ENCODE measurements at regions of chr10 and their contacts with region 1.

Region 1: DNA sequence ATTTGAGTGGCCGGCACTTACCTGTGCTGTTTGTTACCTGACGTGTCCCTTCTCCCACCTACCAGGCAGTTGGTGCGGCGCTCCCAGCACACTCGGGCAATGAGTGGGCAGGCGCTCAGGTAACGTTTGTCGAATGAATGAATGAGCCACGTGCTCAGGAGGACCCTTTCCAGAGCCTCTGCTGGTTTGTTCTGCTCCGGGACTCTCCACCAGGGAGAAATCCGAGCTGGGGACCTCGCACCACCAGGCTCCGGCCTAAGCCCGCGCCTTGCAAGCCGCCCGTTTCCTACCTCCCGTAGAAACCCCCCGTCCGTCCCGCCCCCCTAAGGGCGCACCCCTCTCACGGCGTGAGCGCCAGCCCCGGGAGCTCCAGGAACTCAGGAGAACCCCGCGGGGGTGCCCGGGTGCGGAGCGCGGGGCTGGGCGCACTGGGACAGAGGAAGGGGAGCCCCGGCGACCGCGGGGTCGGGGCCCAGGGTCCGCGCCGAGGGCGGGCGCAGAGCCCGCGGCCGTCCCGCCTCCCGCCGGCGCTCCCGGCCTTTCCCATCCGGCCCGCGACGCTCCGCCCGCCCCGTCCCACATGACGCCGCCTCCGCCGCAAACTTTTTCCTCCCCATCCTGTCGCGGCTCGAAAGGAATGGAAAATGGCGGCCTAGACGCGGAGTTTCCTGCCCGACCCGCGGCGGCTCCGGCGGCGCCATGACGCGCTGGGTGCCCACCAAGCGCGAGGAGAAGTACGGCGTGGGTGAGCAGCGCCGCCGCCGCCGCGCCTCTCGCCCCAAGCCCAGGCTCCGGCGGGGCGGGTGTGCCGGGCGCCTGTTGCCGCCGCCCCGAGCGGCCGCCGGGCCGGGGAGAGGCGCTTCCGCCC is at the start of gene DOCK1:
- DNase-seq: peak; percentile 53
- H3K4me3 ChIP-seq: peak within 1 kb of the TSS; percentile 83 to 93
- H3K27ac ChIP-seq: peak within 1 kb of the TSS; percentile 62 to 75
- H3K4me1 ChIP-seq: no peaks in the 10 kb centered on the region
- H3K27me3 ChIP-seq: no peaks in the 10 kb centered on the region
- CTCF ChIP-seq: no peak
- POLR2A ChIP-seq: peak; percentile 55
- total RNA-seq, gene DOCK1: 41.2 to 56.0 TPM

Region 2: GRCh38 chr10:127024675-127025435 is 119.8 kb after region 1 on chr10:
- intact Hi-C with region 1: loop called (anchors 5 kb)
- DNase-seq: peak; percentile 44
- H3K4me3 ChIP-seq: no peak overlapping the region
- H3K27ac ChIP-seq: no peak overlapping the region
- H3K4me1 ChIP-seq: no peaks in the 10 kb centered on the region
- H3K27me3 ChIP-seq: no peaks in the 10 kb centered on the region
- CTCF ChIP-seq: no peak
- POLR2A ChIP-seq: no peak

Region 3: DNA sequence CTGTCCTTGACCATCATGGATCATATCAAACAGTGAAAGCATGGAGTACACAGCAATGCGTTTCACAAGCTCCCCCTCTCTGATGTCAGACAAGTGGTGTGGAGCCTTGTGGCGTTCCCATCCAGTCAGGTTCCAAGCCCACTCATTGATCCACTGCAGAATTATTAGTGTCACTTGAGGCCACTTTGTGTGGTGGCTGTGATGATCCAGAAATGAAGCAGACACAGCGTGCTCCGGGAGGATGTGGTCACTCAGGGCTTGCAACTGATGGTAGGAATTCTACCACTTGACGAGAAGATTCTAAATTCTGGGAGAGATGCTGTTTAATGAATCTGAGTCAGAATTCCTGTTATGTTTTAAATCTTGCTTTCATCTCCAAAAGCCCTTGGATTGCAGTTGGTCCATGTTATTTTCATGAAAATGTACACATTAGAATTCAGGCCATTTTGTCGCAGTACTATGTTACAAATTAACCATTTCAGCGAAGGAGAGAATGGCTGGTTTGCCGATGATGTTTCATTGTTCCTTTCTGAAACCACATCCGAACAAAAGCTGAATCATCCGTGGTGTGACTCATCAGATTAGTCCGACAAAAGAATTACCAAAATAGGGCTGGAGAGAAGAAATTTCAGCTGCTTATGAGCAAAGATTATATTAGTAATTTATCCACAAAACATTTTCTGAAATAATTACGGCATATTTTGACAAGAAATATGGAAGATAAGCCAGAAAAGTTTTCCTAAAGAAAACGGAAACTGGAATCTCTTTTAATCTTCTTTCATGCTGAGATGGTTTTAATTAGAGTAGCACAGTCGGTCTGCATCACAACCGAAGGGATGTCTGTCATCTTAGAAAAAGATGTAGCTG is 243.2 kb after region 1 on chr10:
- intact Hi-C with region 1: no loop called
- DNase-seq: no peak
- H3K4me3 ChIP-seq: no peak overlapping the region
- H3K27ac ChIP-seq: peak overlapping the region in 1 of 2 donors; percentile 3
- H3K4me1 ChIP-seq: no peaks in the 10 kb centered on the region
- H3K27me3 ChIP-seq: no peaks in the 10 kb centered on the region
- CTCF ChIP-seq: no peak
- POLR2A ChIP-seq: no peak

Measured in prostate gland (tissue), 2 donors.